Activated B cell treated with CpG ODN at 0.5 μM for 24 hours (primary cell): ENCODE measurements at regions of chr13 and their contacts with region 1.

Region 1: GRCh38 chr13:39655569-39656324 is at the start of gene COG6:
- DNase-seq: peak; percentile 99
- ATAC-seq: peak; percentile 91
- H3K4me3 Mint-ChIP-seq: peak within 1 kb of the TSS; percentile 91
- H3K27ac Mint-ChIP-seq: peak within 1 kb of the TSS; percentile 85
- H3K4me1 Mint-ChIP-seq: peaks cover 26% of the 10 kb centered on the region
- H3K27me3 Mint-ChIP-seq: peaks cover 2% of the 10 kb centered on the region
- CTCF ChIP-seq: no peak
- total RNA-seq, gene COG6: 28.9 and 29.6 TPM in 2 replicates

Region 2: GRCh38 chr13:39037880-39038568 is 617.7 kb before region 1 on chr13 and contains the starts of genes NHLRC3 and PROSER1:
- CTCF ChIA-PET with region 1: no interaction called
- POLR2A ChIA-PET with region 1: no interaction called
- intact Hi-C with region 1: loop called (anchors 1 kb)
- DNase-seq: peak; percentile 73
- ATAC-seq: peak; percentile 78
- H3K4me3 Mint-ChIP-seq: peak within 1 kb of the TSS; percentile 87
- H3K27ac Mint-ChIP-seq: peak within 1 kb of the TSS; percentile 99
- H3K4me1 Mint-ChIP-seq: peaks cover 47% of the 10 kb centered on the region
- H3K27me3 Mint-ChIP-seq: no peaks in the 10 kb centered on the region
- CTCF ChIP-seq: no peak
- total RNA-seq, gene NHLRC3: 17.3 and 24.6 TPM in 2 replicates
- total RNA-seq, gene PROSER1: 57.3 and 57.8 TPM in 2 replicates

Region 3: DNA sequence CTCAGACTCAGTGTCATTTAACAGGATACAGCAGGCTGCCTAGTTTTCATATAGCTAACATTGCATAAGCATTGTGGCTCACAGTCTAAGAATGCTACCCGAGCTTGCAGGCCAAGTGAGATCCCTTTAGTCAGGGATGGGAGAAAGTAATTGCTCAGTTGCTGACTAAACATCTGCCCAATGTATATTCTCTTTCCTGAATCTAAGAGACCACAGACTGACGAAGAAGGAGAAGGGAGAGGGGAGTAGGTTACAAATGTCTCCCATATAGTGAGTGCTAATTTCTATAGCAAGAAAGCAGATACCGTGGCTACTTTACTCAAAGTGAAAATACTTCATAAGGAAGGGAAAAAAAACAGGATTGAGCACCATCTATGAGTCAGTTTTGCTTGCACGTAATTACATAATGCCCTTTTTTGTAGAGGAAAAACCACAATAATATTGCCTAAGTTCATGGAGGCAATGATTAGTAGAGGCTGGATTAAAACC is 453.7 kb after region 1 on chr13:
- CTCF ChIA-PET with region 1: no interaction called
- POLR2A ChIA-PET with region 1: no interaction called
- intact Hi-C with region 1: no loop called
- DNase-seq: no peak
- ATAC-seq: no peak
- H3K4me3 Mint-ChIP-seq: no peak overlapping the region
- H3K27ac Mint-ChIP-seq: no peak overlapping the region
- H3K4me1 Mint-ChIP-seq: peaks cover 9% of the 10 kb centered on the region
- H3K27me3 Mint-ChIP-seq: no peaks in the 10 kb centered on the region
- CTCF ChIP-seq: no peak